ENCODE measurements at regions of chr10 and their contacts with region 1.

Region 1: DNA sequence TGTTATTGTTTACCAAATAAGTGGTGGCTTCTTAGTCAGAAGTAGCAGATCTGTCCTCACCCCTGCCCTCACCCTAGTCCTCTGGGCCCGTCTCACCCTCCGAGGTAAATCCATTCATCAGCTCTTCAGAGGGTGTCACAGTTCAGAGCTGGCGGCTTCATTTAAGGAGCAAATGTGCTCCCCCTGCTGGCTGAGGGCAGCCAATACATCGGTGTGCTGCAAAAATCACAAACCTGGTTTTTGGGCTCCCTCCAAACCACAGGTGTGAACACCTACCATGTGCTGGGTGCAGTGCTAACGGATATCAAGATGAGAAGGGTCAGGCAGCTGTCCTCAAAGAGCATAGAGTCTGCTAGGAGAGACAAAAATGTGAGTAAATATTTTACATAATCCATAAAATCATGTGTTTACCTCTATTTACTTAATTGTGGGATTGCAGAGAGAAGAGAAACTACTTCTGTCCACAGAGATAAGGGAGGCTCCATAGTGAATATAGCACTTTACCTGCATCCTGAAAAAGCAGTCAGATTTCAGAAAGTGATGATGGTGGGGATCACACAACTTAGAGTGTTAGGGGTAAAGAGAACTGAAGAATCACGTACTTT is 15.5 kb upstream of the CRTAC1 start:
- DNase-seq: peak in 4 of 5 donors; percentile 45 to 57 (median 49)
- ATAC-seq: peak in 3 of 4 donors; percentile 40 to 65 (median 45)
- H3K4me3 ChIP-seq: no peak overlapping the region
- H3K27ac ChIP-seq: no peak overlapping the region
- H3K4me1 ChIP-seq: peaks cover 0 to 24% (median 5%) of the 10 kb centered on the region in 12 donors
- H3K27me3 ChIP-seq: peaks cover 0 to 12% (median 0%) of the 10 kb centered on the region in 9 donors
- CTCF ChIP-seq: peak; percentile 75 to 93 (median 84)
- POLR2A ChIP-seq: no peak

Region 2: GRCh38 chr10:98134431-98135221 is 88.7 kb after region 1 on chr10 and contains the start of gene R3HCC1L:
- intact Hi-C with region 1: loop called in 1 of 10 experiments (anchors 5 kb)
- DNase-seq: peak; percentile 90 to 95 (median 93)
- ATAC-seq: peak; percentile 98 to 99 (median 99)
- H3K4me3 ChIP-seq: peak within 1 kb of the TSS; percentile 65 to 100 (median 96)
- H3K27ac ChIP-seq: peak within 1 kb of the TSS; percentile 78 to 99 (median 92)
- H3K4me1 ChIP-seq: peaks cover 0 to 52% (median 12%) of the 10 kb centered on the region in 12 donors
- H3K27me3 ChIP-seq: no peaks in the 10 kb centered on the region
- CTCF ChIP-seq: peak in 3 of 12 donors; percentile 5 to 17 (median 15)
- POLR2A ChIP-seq: peak in 1 of 2 donors; percentile 78
- total RNA-seq, gene R3HCC1L: 4.7 to 8.6 (median 5.2) TPM

Region 3: GRCh38 chr10:98170249-98171117 is 124.6 kb after region 1 on chr10:
- intact Hi-C with region 1: no loop called
- DNase-seq: peak in 2 of 5 donors; percentile 20 to 22
- ATAC-seq: peak in 2 of 4 donors; percentile 55 to 68
- H3K4me3 ChIP-seq: no peak overlapping the region
- H3K27ac ChIP-seq: no peak overlapping the region
- H3K4me1 ChIP-seq: peaks cover 0 to 23% (median 8%) of the 10 kb centered on the region in 12 donors
- H3K27me3 ChIP-seq: no peaks in the 10 kb centered on the region
- CTCF ChIP-seq: peak; percentile 62 to 83 (median 72)
- POLR2A ChIP-seq: no peak

Measured in heart left ventricle (tissue), 16 donors.